Posterior cingulate gyrus (tissue), 11 donors: ENCODE measurements at regions of chr18 and their contacts with region 1.

Region 1: DNA sequence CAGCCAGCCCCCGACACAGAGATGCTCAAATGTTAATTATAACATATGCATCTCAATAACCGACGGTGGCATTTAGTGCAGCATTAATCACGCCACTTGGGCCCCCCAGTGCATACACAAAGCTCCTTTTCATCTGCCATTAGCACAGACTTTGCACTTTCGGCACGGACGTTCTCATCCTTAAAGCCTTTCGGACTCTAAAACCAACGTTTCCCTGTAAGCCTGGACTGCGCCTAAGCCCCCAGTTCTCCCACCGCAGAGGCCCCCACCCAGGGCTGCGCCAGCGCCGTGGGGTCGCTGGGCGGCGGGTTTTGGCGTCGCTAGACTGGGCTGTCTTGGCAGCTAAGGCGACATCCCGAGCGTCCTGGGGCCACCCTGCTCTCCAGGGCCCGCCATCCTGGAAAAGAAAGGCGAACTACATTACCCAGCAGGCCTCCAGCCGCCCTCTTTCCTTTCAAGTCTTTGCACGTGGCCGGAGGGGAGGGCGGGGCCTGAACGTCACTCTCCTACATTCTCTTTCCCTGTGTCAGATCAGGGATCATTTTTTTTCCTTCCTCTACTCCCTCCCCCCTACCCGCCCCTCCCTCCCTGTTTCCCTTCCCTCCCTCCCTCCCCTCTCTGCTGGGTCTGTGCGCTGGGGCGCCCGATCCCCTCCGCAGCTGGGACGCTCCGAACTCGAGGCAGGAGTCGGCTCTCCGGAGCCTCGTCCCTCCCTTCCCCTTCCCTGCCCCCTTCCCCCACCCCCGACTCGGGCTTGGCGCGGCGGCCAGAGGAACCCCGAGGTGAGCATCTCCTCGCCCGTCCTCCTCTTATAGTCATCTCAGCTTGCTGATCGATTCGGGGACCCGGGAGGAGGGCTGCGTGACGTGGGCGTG is at the start of gene CTIF:
- DNase-seq: peak; percentile 95 to 99 (median 96)

Region 2: DNA sequence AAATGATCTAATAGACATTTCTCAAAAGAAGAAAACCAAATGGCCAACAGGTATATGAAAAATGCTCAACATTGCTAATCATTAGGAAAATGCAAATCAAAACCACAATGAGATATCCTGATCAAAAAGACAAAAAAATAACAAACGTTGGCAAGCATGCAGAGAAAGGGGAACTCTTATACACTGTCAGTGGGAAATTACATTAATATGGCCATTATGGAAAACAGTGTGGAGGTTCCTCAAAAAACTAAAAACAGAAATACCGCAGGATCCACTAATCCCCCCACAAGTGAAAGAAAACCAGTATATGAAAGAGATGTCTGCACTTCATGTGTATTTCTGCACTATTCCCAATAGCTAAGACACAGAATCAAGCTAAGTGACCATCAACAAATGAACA is 57.7 kb before region 1 on chr18:
- intact Hi-C with region 1: loop called (anchors 5 kb)
- DNase-seq: no peak

Region 3: DNA sequence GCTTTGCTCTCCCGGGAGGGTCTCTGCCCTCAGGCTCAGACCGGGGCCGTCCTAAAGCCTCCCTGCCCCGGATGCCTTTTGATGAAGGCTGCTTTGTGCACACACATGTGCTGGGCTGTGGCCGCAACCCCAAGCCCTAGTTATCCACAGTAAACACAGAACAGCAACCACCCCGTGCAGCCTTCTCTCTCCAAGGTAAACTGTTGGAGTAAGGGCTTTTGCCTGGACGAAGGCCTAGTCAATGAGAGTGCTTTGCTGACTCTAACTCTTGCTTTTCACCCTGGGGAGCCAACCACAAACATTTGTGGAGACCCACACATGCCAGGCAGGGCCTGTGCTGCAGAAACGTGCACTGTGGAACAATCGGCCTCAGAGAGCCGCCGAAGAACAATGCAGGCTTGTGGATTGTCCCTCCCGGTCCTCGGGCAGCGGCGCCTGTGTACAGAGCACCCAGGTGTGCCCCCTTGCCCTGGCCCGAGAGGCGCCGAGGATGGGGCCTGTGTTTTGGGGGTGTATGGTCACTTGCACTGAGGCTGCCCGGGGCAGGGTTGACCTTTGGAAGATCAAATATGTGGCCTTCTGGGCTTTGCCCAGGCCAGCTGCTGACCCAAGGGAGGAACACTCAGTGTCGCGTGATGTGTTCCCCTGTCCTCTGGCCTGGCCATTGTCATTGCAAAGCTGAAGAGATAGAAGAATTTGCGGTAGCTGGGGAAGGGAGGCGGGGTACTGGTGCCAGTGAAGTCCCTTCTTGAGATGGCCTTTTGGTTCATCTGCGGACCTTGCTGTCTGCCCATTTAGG is 37.1 kb after region 1 on chr18:
- intact Hi-C with region 1: loop called (anchors 5 kb)
- DNase-seq: peak in 9 of 10 donors; percentile 54 to 96 (median 66)

Region 4: DNA sequence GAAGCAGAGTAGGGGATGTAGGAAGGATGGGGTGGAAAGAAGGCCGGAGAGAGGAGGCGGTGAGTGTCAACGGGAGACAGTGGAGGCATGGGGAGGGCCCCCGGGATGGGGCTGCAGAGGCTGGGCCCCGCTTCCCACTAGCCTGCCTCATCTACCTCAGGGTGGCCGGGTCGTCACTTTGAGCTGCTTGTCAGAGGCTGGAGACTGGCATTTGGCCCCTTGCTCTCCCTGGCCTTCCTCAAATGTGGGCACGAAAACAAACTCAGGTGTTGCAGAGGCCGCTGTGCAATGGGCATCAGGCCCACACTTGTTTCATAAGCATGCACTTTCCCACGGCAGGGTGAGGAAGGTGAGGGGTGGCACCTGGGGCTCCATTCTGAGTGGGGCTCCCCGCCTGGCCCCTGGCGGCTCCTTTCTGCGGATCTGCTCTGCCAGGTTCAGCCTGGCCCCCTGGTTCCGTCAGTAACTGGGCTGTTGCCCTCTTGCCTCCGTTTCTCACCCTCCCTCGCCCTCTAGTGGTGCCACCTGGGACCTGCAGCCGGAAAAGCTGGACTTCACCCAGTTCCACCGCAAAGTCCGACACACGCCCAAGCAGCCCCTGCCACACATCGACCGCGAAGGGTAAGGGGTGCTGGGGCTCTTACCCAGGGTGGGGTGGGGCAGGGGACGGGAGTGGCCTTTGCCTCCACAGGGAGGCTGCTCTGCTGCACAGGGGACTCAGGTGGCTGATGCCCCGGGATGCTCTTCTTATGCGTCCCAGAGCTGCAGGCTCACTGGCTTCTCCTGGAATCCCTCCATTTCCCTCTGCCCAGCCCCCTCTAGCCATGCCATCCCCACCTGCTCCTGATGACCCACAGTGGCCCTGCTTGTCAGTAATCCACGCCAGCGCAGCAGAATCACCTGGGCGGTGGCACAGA is 125.4 kb after region 1 on chr18:
- intact Hi-C with region 1: loop called (anchors 5 kb)
- DNase-seq: peak; percentile 66 to 97 (median 86)